ENCODE measurements at regions of chr7 and their contacts with region 1.

Region 1: DNA sequence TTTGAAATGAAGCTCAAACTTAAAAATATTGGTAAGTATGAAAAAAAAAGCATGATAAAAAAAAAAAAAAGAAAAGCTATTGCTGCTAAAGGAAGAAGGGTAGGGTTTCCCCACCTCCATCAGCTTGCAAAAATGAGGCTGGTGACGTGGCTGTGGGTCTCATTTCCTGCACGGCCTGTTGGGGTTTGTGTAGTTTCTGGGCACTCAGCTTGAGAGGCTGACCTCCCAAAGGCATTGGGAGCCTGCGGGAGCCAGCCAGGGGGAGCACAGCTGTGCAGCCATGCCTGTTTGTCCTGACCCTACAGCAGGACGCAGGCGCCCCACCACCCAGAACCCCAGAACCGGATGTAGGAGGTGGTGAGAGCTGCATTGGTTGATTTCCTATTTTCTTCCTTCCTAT is 48.8 kb upstream of the CARD11 start:
- DNase-seq: no peak
- H3K4me3 ChIP-seq: no peak overlapping the region
- H3K27ac ChIP-seq: no peak overlapping the region
- H3K4me1 ChIP-seq: no peaks in the 10 kb centered on the region
- H3K27me3 ChIP-seq: no peaks in the 10 kb centered on the region
- CTCF ChIP-seq: no peak
- EP300 ChIP-seq: no peak
- RAD21 ChIP-seq: no peak

Region 2: DNA sequence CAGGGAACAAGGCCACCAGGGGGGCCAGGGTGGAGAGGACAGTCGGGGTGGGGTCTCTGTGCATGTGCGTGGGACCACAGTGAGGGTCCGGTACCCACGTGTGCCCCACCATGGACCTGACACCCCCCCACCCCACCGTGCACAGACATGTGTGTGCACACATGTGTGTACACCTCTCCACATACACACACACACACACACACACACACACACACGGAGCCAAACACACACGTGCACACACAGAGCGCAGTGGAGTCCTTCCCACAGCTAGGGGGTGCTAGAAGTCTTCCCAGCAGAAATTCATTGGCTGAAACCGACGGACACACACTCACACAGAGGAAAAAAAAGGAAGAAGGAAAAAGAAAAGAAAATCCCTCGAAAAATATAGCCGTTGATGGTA is 205.6 kb before region 1 on chr7:
- CTCF ChIA-PET with region 1: interaction called, 17 read pairs
- POLR2A ChIA-PET with region 1: no interaction called
- DNase-seq: peak; percentile 91
- H3K4me3 ChIP-seq: peak overlapping the region in 1 of 2 experiments; percentile 33; a peak in 1 of 4 replicates
- H3K27ac ChIP-seq: no peak overlapping the region
- H3K4me1 ChIP-seq: peaks cover 0 to 2% of the 10 kb centered on the region in 2 experiments; a peak in 1 of 4 replicates
- H3K27me3 ChIP-seq: no peaks in the 10 kb centered on the region
- CTCF ChIP-seq: peak; percentile 92
- EP300 ChIP-seq: no peak
- RAD21 ChIP-seq: peak; percentile 99

Region 3: DNA sequence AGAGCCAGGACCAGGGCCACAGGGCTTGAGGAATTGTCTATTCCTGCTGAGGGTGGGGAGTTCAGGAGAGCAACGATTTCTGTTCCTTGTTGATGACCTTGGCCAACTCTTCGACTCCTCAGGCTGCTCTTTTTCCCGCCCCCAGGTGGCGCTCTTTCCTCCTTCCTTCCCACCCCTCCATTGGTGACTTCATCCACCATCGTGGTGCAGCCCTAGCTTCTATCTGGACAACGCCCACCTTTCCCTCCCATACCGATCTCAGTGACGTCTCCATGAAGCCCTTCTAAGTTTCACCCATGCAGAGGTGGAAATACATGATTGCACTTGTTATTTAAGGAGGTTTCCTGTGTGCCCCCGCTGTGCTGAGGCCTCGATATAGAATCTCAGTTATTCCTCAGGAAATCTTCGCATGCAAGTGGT is 26.7 kb before region 1 on chr7:
- CTCF ChIA-PET with region 1: interaction called, 10 read pairs
- POLR2A ChIA-PET with region 1: no interaction called
- DNase-seq: peak; percentile 46
- H3K4me3 ChIP-seq: no peak overlapping the region
- H3K27ac ChIP-seq: no peak overlapping the region
- H3K4me1 ChIP-seq: no peaks in the 10 kb centered on the region
- H3K27me3 ChIP-seq: no peaks in the 10 kb centered on the region
- CTCF ChIP-seq: peak; percentile 35; the same call in 1 of the 2 replicates
- EP300 ChIP-seq: no peak
- RAD21 ChIP-seq: peak; percentile 35

Region 4: DNA sequence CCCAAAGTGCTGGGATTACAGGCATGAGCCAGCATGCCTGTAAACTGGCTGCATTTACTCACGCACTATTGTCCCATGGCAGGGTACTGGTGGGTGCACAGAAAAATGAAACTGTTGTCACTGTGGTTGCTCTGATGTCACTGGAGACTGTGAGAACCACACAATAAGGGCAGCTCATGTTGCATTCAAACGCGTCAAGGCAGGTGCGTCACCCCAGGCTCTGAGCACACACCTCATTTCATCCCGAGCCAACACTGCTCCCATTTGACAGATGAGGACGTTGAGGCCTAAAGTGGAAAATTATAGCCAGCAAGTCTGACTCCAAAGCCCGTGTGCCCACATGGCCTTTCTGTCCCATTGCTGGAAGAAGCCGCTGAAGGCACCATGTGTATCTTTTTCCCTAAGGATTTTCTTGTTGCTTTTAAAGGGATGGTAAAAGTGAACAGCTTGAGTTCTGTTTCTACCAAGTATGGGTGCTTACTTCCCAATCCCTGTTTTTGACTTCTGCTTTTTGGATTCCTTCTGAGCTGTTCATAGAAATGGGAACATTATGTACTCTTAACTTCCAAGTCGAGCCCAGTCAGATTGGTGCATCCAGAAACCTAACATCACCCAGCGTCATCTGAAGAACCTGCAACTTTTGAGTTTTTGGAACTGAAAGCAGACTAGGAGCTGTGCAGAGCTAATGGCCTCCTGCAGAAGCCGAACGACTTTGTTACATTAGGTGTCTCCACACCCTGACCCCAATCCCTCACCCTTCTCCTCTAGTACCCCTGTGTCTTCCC is 11.3 kb after region 1 on chr7:
- CTCF ChIA-PET with region 1: interaction called, 56 read pairs
- POLR2A ChIA-PET with region 1: no interaction called
- DNase-seq: no peak
- H3K4me3 ChIP-seq: no peak overlapping the region
- H3K27ac ChIP-seq: no peak overlapping the region
- H3K4me1 ChIP-seq: no peaks in the 10 kb centered on the region
- H3K27me3 ChIP-seq: no peaks in the 10 kb centered on the region
- CTCF ChIP-seq: no peak
- EP300 ChIP-seq: no peak
- RAD21 ChIP-seq: no peak

Region 5: GRCh38 chr7:3154912-3155494 is 62.5 kb after region 1 on chr7:
- CTCF ChIA-PET with region 1: interaction called, 15 read pairs
- POLR2A ChIA-PET with region 1: no interaction called
- DNase-seq: peak; percentile 73
- H3K4me3 ChIP-seq: no peak overlapping the region
- H3K27ac ChIP-seq: no peak overlapping the region
- H3K4me1 ChIP-seq: no peaks in the 10 kb centered on the region
- H3K27me3 ChIP-seq: no peaks in the 10 kb centered on the region
- CTCF ChIP-seq: peak; percentile 76
- EP300 ChIP-seq: no peak
- RAD21 ChIP-seq: peak; percentile 94

Measured in SK-N-SH (cell line).